ENCODE measurements at regions of chr10 and their contacts with region 1.

Region 1: DNA sequence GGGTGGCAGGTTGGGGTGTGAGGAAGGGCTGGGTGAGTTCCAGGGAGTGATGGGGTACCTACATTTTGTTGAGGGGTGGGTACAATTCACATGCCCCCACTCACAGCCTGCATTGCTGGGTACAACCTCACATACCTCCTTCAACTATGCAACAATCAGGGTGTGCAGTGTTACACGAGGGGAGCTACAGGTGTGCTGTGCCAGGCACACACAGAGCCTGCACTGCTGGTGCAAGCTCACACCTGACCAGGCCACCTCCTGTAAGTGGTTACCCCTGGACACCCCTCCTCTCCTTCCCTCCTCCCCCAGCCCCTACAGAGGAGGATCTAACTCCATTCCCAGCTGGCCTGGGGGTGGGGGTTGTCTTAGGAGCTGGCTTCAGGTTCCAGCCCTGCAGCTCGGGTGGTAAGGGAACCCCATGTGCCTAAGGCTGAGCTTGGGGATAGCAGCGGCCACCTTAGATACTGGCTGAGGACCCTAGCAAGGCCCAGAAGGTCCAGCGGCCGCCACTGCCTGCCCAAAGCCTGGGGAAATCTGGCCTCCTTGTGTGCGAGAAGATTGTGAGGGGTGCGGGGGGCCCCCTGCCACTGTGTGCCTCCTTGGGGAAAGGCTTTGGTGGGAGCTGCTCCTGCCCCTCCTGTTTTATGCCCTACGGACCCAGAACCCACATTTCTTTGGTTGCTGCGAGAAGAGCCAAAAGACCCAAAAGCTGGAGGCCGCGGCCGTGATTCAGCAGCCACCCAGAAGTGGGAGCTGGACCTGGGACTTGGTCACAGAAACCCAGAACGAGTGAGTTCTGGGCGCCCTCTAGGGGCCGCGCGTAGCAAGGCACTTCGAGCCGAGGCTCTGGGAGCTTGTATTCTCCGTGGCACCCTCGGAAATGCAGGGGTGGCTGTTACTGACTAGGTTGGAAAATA is 10.8 kb downstream of the TLX1 start:
- DNase-seq: peak; percentile 60 to 89 (median 77)
- ATAC-seq: peak; percentile 87
- H3K4me3 ChIP-seq: no peak overlapping the region
- H3K4me3 Mint-ChIP-seq: no peak overlapping the region
- H3K27ac ChIP-seq: no peak overlapping the region
- H3K27ac Mint-ChIP-seq: no peak overlapping the region
- H3K4me1 ChIP-seq: peaks cover 43% of the 10 kb centered on the region
- H3K4me1 Mint-ChIP-seq: peaks cover 22% of the 10 kb centered on the region
- H3K27me3 ChIP-seq: peaks cover 89 to 99% of the 10 kb centered on the region in 2 experiments
- H3K27me3 Mint-ChIP-seq: peaks cover 93% of the 10 kb centered on the region
- CTCF ChIP-seq: peak; percentile 98

Region 2: DNA sequence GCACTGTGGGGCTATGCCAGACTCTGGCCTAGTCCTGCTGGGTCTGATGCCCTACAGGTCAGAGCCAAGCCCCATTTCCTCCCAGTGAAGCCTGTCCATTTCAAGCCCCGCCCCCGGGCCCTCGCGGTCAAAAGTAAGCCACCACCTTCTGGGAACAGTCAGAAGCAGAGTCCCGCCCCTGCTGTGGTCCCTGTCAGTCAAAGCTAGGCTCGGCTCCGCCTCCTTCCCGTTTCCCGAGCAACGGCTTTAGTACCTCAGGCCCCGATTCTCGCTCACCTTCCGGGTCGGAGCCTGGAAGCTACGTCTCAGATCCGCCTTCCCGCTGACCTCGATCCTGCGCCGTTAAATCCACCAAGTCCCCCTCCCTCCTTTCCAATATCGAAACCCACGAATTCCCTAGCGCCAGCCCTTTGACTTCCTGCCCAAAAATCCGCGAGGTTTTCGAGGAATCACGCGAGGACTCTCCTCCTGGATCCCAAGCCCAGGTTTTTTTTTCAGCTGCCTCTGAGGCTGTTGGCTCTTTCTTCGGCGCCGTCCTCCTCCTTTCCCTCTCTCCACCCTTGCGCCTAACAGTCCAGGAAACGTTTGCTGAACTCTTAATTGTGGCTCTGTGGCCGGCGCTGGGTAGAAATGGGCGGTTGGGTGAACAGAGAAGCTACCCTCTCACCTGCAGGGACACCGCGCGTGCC is 99.1 kb before region 1 on chr10:
- CTCF ChIA-PET with region 1: interaction called, 9 read pairs
- POLR2A ChIA-PET with region 1: no interaction called
- intact Hi-C with region 1: loop called in 1 of 2 experiments (anchors 5 kb)
- DNase-seq: peak; percentile 58 to 93 (median 77)
- ATAC-seq: peak; percentile 74
- H3K4me3 ChIP-seq: peak overlapping the region; percentile 66
- H3K4me3 Mint-ChIP-seq: peak overlapping the region; percentile 95
- H3K27ac ChIP-seq: peak overlapping the region in 1 of 2 donors; percentile 39
- H3K27ac Mint-ChIP-seq: peak overlapping the region; percentile 76
- H3K4me1 ChIP-seq: peaks cover 24% of the 10 kb centered on the region
- H3K4me1 Mint-ChIP-seq: peaks cover 26% of the 10 kb centered on the region
- H3K27me3 ChIP-seq: peaks cover 10 to 15% of the 10 kb centered on the region in 2 experiments
- H3K27me3 Mint-ChIP-seq: peaks cover 17% of the 10 kb centered on the region
- CTCF ChIP-seq: no peak

Region 3: GRCh38 chr10:101050208-101051069 is 91.4 kb before region 1 on chr10:
- CTCF ChIA-PET with region 1: interaction called, 8 read pairs
- POLR2A ChIA-PET with region 1: interaction called, 3 read pairs
- intact Hi-C with region 1: loop called in 1 of 2 experiments (anchors 5 kb)
- DNase-seq: peak; percentile 57 to 85 (median 76)
- ATAC-seq: peak; percentile 98
- H3K4me3 ChIP-seq: no peak overlapping the region
- H3K4me3 Mint-ChIP-seq: peak overlapping the region; percentile 39
- H3K27ac ChIP-seq: no peak overlapping the region
- H3K27ac Mint-ChIP-seq: no peak overlapping the region
- H3K4me1 ChIP-seq: peaks cover 20% of the 10 kb centered on the region
- H3K4me1 Mint-ChIP-seq: peaks cover 14% of the 10 kb centered on the region
- H3K27me3 ChIP-seq: peaks cover 44 to 46% of the 10 kb centered on the region in 2 experiments
- H3K27me3 Mint-ChIP-seq: peaks cover 52% of the 10 kb centered on the region
- CTCF ChIP-seq: peak; percentile 76

Region 4: GRCh38 chr10:101095542-101096213 is 46.2 kb before region 1 on chr10:
- CTCF ChIA-PET with region 1: interaction called, 151 read pairs
- POLR2A ChIA-PET with region 1: interaction called, 23 read pairs
- intact Hi-C with region 1: loop called (anchors 1 kb)
- DNase-seq: peak; percentile 43 to 85 (median 63)
- ATAC-seq: peak; percentile 91
- H3K4me3 ChIP-seq: no peak overlapping the region
- H3K4me3 Mint-ChIP-seq: no peak overlapping the region
- H3K27ac ChIP-seq: no peak overlapping the region
- H3K27ac Mint-ChIP-seq: no peak overlapping the region
- H3K4me1 ChIP-seq: peaks cover 6% of the 10 kb centered on the region
- H3K4me1 Mint-ChIP-seq: no peaks in the 10 kb centered on the region
- H3K27me3 ChIP-seq: peaks cover 27 to 28% of the 10 kb centered on the region in 2 experiments
- H3K27me3 Mint-ChIP-seq: peaks cover 78% of the 10 kb centered on the region
- CTCF ChIP-seq: peak; percentile 78

Region 5: GRCh38 chr10:101120884-101121653 is 20.8 kb before region 1 on chr10:
- CTCF ChIA-PET with region 1: interaction called, 12 read pairs
- POLR2A ChIA-PET with region 1: interaction called, 5 read pairs
- intact Hi-C with region 1: no loop called
- DNase-seq: peak in 11 of 14 experiments; percentile 23 to 72 (median 41)
- ATAC-seq: peak; percentile 89
- H3K4me3 ChIP-seq: peak overlapping the region; percentile 79
- H3K4me3 Mint-ChIP-seq: peak overlapping the region; percentile 97
- H3K27ac ChIP-seq: no peak overlapping the region
- H3K27ac Mint-ChIP-seq: peak overlapping the region; percentile 68
- H3K4me1 ChIP-seq: peaks cover 39% of the 10 kb centered on the region
- H3K4me1 Mint-ChIP-seq: peaks cover 28% of the 10 kb centered on the region
- H3K27me3 ChIP-seq: peaks cover 42 to 49% of the 10 kb centered on the region in 2 experiments
- H3K27me3 Mint-ChIP-seq: peaks cover 70% of the 10 kb centered on the region
- CTCF ChIP-seq: no peak

Region 6: GRCh38 chr10:101130984-101131961 is 10.6 kb before region 1 on chr10 and contains the start of gene TLX1:
- CTCF ChIA-PET with region 1: interaction called, 13 read pairs
- POLR2A ChIA-PET with region 1: interaction called, 4 read pairs
- intact Hi-C with region 1: no loop called
- DNase-seq: peak in 1 of 14 experiments; percentile 28
- ATAC-seq: peak; percentile 37
- H3K4me3 ChIP-seq: no peak within 1 kb of the TSS
- H3K4me3 Mint-ChIP-seq: peak within 1 kb of the TSS; percentile 5
- H3K27ac ChIP-seq: no peak within 1 kb of the TSS
- H3K27ac Mint-ChIP-seq: no peak within 1 kb of the TSS
- H3K4me1 ChIP-seq: peaks cover 45% of the 10 kb centered on the region
- H3K4me1 Mint-ChIP-seq: peaks cover 37% of the 10 kb centered on the region
- H3K27me3 ChIP-seq: peaks cover 72 to 90% of the 10 kb centered on the region in 2 experiments
- H3K27me3 Mint-ChIP-seq: peaks cover 92% of the 10 kb centered on the region
- CTCF ChIP-seq: no peak
- total RNA-seq, gene TLX1: not detected

Region 7: GRCh38 chr10:101161494-101162299 is 19.8 kb after region 1 on chr10:
- CTCF ChIA-PET with region 1: interaction called, 15 read pairs
- POLR2A ChIA-PET with region 1: no interaction called
- intact Hi-C with region 1: no loop called
- DNase-seq: peak; percentile 53 to 90 (median 62)
- ATAC-seq: peak; percentile 97
- H3K4me3 ChIP-seq: no peak overlapping the region
- H3K4me3 Mint-ChIP-seq: no peak overlapping the region
- H3K27ac ChIP-seq: no peak overlapping the region
- H3K27ac Mint-ChIP-seq: no peak overlapping the region
- H3K4me1 ChIP-seq: peaks cover 9% of the 10 kb centered on the region
- H3K4me1 Mint-ChIP-seq: peaks cover 12% of the 10 kb centered on the region
- H3K27me3 ChIP-seq: peaks cover 25 to 34% of the 10 kb centered on the region in 2 experiments
- H3K27me3 Mint-ChIP-seq: peaks cover 92% of the 10 kb centered on the region
- CTCF ChIP-seq: peak; percentile 98

Measured in CD4-positive, alpha-beta T cell (primary cell).